WTC11 (cell line): ENCODE measurements at regions of chr5 and their contacts with region 1.

Region 1: GRCh38 chr5:166961039-166961438 is 1330.4 kb upstream of the WWC1 start:
- DNase-seq: no peak
- ATAC-seq: no peak
- H3K4me3 Mint-ChIP-seq: no peak overlapping the region
- H3K27ac Mint-ChIP-seq: no peak overlapping the region
- H3K4me1 Mint-ChIP-seq: peaks cover 24% of the 10 kb centered on the region
- H3K27me3 Mint-ChIP-seq: no peaks in the 10 kb centered on the region; the same call in 1 of the 2 replicates
- CTCF ChIP-seq: peak; percentile 27; the same call in 1 of the 2 replicates

Region 2: GRCh38 chr5:166909040-166909439 is 52.0 kb before region 1 on chr5:
- CTCF ChIA-PET with region 1: no interaction called
- POLR2A ChIA-PET with region 1: no interaction called
- DNase-seq: no peak
- ATAC-seq: no peak
- H3K4me3 Mint-ChIP-seq: no peak overlapping the region
- H3K27ac Mint-ChIP-seq: no peak overlapping the region
- H3K4me1 Mint-ChIP-seq: 0 out of 2 replicates have a peak, but pooled peaks cover 3% of the 10 kb centered on the region
- H3K27me3 Mint-ChIP-seq: no peaks in the 10 kb centered on the region
- CTCF ChIP-seq: no peak

Region 3: DNA sequence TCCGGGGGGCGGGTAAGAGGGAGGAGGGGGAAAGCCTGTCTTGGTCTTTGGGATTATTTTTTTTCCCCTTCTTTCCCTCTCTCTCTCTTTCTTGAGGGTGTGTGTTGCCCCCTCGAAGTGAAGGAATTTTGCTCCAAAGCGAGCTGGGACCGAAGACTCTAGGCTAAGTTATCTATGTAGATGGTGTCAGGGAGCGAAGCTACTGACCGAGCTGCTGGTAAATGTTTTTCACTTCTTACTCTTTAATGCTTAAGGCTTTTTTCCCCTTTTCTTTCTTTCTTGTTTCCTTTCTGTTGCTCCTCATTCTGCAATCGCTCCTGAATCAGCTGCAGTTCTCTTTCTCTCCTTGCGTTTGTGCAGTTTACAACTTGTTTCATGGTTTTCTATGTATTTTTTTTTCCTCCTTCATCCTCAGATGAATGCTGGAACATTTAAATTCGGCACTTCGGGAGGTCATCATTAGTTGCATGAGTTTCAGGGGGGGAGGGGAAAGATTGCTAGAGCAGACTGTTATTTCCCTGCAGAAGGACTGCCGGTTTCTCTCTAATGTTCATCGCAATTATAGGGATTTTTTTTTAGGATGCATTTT is 18.4 kb after region 1 on chr5:
- CTCF ChIA-PET with region 1: interaction called, 12 read pairs
- POLR2A ChIA-PET with region 1: no interaction called
- DNase-seq: no peak
- ATAC-seq: peak; percentile 1; the same call in 1 of the 2 replicates
- H3K4me3 Mint-ChIP-seq: peak overlapping the region; percentile 90
- H3K27ac Mint-ChIP-seq: peak overlapping the region; percentile 73; the same call in 1 of the 2 replicates
- H3K4me1 Mint-ChIP-seq: peaks cover 50% of the 10 kb centered on the region
- H3K27me3 Mint-ChIP-seq: peaks cover 14% of the 10 kb centered on the region
- CTCF ChIP-seq: no peak

Region 4: DNA sequence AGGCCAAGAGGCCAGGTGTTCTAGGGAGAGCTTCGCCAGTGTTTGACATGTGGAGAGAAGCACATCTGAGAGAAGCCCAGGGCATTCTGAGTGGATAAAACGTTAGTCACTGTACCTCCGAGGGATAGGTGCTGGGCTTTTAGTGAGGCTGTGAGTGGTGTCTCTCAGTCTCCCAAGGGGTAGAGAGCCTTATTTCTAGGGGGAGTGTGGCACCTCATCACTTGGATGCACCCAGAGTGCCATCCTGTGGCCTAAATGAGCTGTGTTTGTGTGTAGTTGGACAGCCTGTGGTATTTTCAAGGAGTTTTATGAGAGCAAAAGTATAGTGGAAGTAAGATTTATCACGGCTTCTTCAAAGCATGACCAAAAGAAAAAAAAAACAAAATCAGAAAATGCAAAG is 283.5 kb after region 1 on chr5:
- CTCF ChIA-PET with region 1: interaction called, 15 read pairs
- POLR2A ChIA-PET with region 1: no interaction called
- DNase-seq: peak; percentile 65
- ATAC-seq: peak; percentile 96
- H3K4me3 Mint-ChIP-seq: no peak overlapping the region
- H3K27ac Mint-ChIP-seq: no peak overlapping the region
- H3K4me1 Mint-ChIP-seq: peaks cover 4% of the 10 kb centered on the region; the same call in 1 of the 2 replicates
- H3K27me3 Mint-ChIP-seq: no peaks in the 10 kb centered on the region
- CTCF ChIP-seq: peak; percentile 39; the same call in 1 of the 2 replicates